ENCODE measurements at regions of chr16 and their contacts with region 1.

Region 1: DNA sequence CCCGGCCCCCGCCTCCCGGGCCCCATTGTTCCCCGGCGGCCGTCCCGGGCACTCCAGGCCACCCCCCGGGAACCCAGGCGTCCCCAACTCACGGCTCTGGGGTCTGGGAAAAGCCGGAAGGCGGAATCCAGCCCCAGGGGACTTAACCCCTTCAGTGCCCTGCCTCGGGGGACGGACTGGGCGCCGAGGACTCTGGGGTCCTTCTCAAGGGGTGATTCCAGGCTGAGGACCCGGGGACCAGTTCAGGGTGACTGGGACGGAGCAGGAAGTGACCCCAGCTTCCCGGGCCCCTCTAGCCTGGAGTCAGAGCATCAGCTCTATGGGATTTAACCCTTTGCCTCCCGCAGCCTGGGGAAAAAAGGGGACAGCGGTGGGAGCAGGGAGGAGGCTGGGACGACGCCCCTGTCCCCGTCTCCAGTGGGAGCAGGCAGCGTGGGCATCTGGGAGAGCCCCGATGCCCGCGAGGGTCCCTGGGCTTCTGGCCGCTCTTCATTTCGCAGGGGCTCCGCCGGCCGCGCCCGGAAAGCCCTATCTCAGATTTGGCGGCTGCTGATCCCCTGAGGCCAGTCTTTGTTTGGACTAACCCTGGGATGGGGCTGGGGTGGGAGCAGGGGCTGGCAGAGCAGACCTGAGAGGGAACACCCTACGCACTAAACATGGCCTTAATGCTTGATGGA is at the start of gene ZNF629:
- DNase-seq: peak; percentile 78 to 89 (median 88)
- ATAC-seq: peak; percentile 84 to 86
- H3K4me3 ChIP-seq: peak within 1 kb of the TSS; percentile 98
- H3K27ac ChIP-seq: peak within 1 kb of the TSS; percentile 81
- H3K4me1 ChIP-seq: peaks cover 7% of the 10 kb centered on the region
- H3K27me3 ChIP-seq: no peaks in the 10 kb centered on the region
- total RNA-seq, gene ZNF629: 22.9 to 25.1 (median 24.8) TPM

Region 2: GRCh38 chr16:30519120-30520049 is 267.7 kb before region 1 on chr16:
- intact Hi-C with region 1: no loop called
- DNase-seq: peak in 1 of 3 donors; percentile 9
- ATAC-seq: no peak
- H3K4me3 ChIP-seq: no peak overlapping the region
- H3K27ac ChIP-seq: no peak overlapping the region
- H3K4me1 ChIP-seq: peaks cover 2% of the 10 kb centered on the region
- H3K27me3 ChIP-seq: no peaks in the 10 kb centered on the region

Region 3: GRCh38 chr16:30893744-30894539 is 106.9 kb after region 1 on chr16 and contains the start of gene BCL7C:
- intact Hi-C with region 1: loop called in 1 of 4 experiments (anchors 10 kb)
- DNase-seq: peak; percentile 95 to 98 (median 98)
- ATAC-seq: peak; percentile 88 to 91
- H3K4me3 ChIP-seq: peak within 1 kb of the TSS; percentile 67
- H3K27ac ChIP-seq: peak within 1 kb of the TSS; percentile 96
- H3K4me1 ChIP-seq: peaks cover 5% of the 10 kb centered on the region
- H3K27me3 ChIP-seq: no peaks in the 10 kb centered on the region
- total RNA-seq, gene BCL7C: 20.6 to 31.7 (median 26.3) TPM

Measured in right cardiac atrium (tissue), 5 donors.